HepG2 (cell line): ENCODE measurements at regions of chr12 and their contacts with region 1.

Region 1: DNA sequence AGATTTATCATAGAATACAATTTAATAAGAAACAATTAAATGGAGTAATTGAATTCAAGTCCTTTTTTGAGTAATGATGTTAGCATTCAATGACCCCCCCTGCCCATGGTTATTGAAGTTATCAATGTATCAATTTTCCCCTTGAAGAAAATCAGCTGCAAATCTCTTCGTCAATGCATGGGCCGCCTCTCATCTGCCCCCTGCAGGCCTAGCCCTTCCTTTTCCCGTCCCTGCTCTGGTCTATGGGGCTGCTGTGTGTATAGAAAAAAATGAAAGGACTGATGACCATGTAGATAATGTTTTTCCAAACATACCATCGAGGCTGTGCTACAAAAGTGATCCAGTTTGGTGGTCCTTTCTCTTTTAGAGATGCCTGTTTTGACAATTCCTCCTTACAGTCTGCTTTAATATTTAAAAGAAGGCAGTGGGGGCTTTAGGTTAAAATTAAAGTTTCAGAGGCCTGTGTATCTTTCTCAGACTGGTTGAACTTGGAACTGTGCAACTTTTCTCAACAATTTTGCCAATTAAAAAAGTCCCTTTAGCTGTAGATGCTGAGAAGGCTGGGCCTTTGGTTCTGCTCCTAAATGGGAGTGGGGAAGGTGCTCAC is 98.4 kb downstream of the APAF1 start:
- DNase-seq: peak; percentile 30
- ATAC-seq: peak; percentile 89
- H3K4me3 ChIP-seq: no peak overlapping the region
- H3K27ac ChIP-seq: no peak overlapping the region
- H3K4me1 ChIP-seq: peaks cover 9% of the 10 kb centered on the region
- H3K27me3 ChIP-seq: peaks cover 12 to 33% of the 10 kb centered on the region in 2 experiments
- CTCF ChIP-seq: peak; percentile 69
- EP300 ChIP-seq: no peak
- POLR2A ChIP-seq: no peak
- RAD21 ChIP-seq: no peak

Region 2: GRCh38 chr12:98698603-98699463 is 44.6 kb before region 1 on chr12:
- CTCF ChIA-PET with region 1: no interaction called
- POLR2A ChIA-PET with region 1: no interaction called
- in situ Hi-C with region 1: no loop called
- intact Hi-C with region 1: loop called (anchors 1 kb)
- DNase-seq: peak; percentile 39
- ATAC-seq: peak; percentile 98
- H3K4me3 ChIP-seq: no peak overlapping the region
- H3K27ac ChIP-seq: no peak overlapping the region
- H3K4me1 ChIP-seq: no peaks in the 10 kb centered on the region
- H3K27me3 ChIP-seq: no peaks in the 10 kb centered on the region
- CTCF ChIP-seq: peak; percentile 83
- EP300 ChIP-seq: no peak
- POLR2A ChIP-seq: no peak
- RAD21 ChIP-seq: peak; percentile 51; the same call in 1 of the 2 replicates

Region 3: GRCh38 chr12:98709022-98709421 is 34.4 kb before region 1 on chr12:
- CTCF ChIA-PET with region 1: no interaction called
- POLR2A ChIA-PET with region 1: no interaction called
- in situ Hi-C with region 1: no loop called
- intact Hi-C with region 1: no loop called
- DNase-seq: no peak
- ATAC-seq: no peak
- H3K4me3 ChIP-seq: no peak overlapping the region
- H3K27ac ChIP-seq: no peak overlapping the region
- H3K4me1 ChIP-seq: no peaks in the 10 kb centered on the region
- H3K27me3 ChIP-seq: no peaks in the 10 kb centered on the region
- CTCF ChIP-seq: no peak
- EP300 ChIP-seq: no peak
- POLR2A ChIP-seq: no peak
- RAD21 ChIP-seq: no peak

Region 4: DNA sequence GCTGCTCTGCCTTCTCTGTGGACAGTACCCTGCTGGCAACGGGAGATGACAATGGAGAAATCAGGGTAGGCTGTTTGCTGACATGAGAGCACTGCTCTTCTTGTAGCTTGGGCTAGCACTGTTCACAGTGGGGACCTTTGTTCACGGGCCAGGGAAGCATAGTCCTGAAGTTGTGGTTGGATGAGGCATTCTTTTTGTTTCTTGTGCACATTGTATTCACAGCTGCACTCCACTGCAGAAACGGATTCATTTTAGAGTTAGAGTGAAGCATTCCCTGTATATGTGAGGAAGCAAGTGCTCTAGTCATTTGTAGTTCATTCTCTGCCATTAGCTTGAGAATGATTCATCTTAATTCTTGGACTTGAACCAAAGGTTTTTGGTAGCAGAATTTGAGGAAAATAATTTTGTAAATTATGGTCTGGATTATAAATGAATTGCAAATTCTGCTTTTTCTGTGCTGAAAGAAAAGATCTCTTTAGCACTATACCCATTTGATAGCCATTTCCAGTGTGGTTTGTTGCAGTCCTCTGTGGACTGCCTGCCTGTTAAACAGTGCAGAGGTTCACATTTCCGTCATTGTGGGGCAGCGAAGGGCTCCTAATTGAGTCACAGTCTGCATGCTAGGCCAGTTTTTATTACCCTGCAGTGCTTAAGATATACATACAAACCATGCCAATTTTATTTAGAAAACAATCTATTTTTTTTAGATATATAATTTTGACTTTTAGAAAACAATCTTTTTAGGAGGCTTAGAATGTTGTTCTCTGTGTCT is 17.8 kb before region 1 on chr12:
- CTCF ChIA-PET with region 1: no interaction called
- POLR2A ChIA-PET with region 1: no interaction called
- in situ Hi-C with region 1: no loop called
- intact Hi-C with region 1: loop called (anchors 2 kb)
- DNase-seq: peak; percentile 28
- ATAC-seq: peak; percentile 97
- H3K4me3 ChIP-seq: no peak overlapping the region
- H3K27ac ChIP-seq: no peak overlapping the region
- H3K4me1 ChIP-seq: no peaks in the 10 kb centered on the region
- H3K27me3 ChIP-seq: no peaks in the 10 kb centered on the region
- CTCF ChIP-seq: peak; percentile 75
- EP300 ChIP-seq: no peak
- POLR2A ChIP-seq: no peak
- RAD21 ChIP-seq: no peak

Region 5: DNA sequence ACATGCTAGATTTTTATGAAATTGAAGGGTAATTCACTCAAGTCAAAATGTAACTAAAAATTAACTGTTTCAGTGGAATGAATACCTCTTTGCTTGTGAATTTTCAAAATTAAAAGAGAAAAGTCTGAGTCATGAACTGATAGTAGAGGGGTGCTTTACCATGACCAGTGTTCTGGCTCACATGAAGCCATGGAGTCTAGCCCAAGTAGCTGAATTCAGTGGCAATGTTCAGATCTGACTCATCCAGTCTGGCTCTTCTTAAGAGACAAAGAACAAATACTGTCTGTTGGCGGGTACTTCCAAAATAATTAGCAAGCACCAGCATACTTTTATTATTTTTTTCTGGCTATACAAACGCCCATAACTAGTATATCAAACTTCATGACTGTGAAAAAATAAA is 537.8 kb after region 1 on chr12:
- CTCF ChIA-PET with region 1: no interaction called
- POLR2A ChIA-PET with region 1: no interaction called
- in situ Hi-C with region 1: no loop called
- intact Hi-C with region 1: no loop called
- DNase-seq: no peak
- ATAC-seq: no peak
- H3K4me3 ChIP-seq: no peak overlapping the region
- H3K27ac ChIP-seq: no peak overlapping the region
- H3K4me1 ChIP-seq: no peaks in the 10 kb centered on the region
- H3K27me3 ChIP-seq: no peaks in the 10 kb centered on the region
- CTCF ChIP-seq: no peak
- EP300 ChIP-seq: no peak
- POLR2A ChIP-seq: no peak
- RAD21 ChIP-seq: no peak